ENCODE measurements at regions of chr2 and their contacts with region 1.

Region 1: DNA sequence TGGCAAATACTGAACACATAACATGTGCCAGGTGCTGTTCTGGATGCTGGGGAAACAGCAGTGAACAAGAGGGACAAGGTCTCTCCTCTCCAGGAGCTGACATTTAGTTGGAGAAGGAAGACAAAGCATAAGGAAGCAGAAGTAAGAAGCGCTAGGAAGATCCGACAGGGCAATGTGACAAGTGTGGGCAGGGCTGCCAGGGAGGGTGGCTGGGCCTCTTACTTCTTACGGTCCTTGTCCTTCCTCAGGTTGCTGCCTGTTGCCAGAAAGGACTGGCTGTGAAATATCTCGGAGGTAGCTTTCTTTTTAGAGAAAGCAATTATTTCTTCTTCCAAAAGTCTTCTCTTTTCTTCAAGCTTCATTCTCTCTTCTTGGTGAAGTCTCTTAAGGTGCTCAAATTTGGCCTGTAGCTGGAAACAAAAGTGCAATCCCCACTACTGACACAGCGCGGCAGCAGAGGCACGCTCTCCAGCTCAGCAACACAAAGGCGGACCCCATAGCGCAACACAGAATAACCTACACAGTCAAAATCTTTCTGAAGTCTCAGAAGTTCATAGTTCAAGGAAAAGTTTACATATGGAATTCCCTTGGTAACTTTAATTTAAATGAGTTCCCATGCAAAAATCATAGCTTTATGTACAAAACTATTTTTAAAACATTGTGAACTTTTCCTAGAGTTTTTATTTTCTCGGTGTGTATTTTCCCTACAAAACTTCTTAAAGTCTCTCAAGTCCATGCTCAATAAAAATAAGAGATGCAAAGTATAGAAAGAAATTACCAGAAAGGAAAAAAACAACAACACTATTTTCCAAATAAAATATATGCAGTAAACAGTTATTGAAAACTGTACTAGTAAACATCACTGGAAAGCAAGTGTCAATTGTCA is 67.7 kb downstream of the SEPTIN10 start:
- DNase-seq: no peak
- ATAC-seq: peak; percentile 84

Region 2: GRCh38 chr2:109331896-109332848 is 213.9 kb before region 1 on chr2:
- intact Hi-C with region 1: no loop called
- DNase-seq: peak; percentile 89
- ATAC-seq: peak; percentile 81

Region 3: DNA sequence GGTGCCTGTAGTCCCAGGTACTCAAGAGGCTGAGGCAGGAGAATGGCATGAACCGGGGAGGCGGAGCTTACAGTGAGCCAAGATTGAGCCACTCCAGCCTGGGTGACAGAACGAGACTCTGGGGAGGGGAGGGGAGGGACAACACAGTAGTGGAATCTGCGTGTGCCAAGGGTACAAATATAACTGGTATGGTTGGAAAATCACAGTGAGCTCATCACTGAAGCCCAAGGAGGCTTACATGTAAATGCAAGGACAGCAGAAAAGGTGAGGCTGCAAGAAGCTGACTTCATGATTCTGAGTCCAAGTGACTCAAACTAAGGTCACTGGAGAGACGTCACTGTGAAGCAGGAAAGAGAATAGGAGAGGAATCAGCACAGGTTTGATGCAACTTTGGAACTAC is 58.5 kb after region 1 on chr2:
- intact Hi-C with region 1: loop called (anchors 5 kb)
- DNase-seq: no peak
- ATAC-seq: peak; percentile 27

Region 4: GRCh38 chr2:109715313-109715805 is 169.3 kb after region 1 on chr2:
- intact Hi-C with region 1: loop called (anchors 2 kb)
- DNase-seq: no peak
- ATAC-seq: peak; percentile 85

Region 5: GRCh38 chr2:109736177-109736827 is 190.2 kb after region 1 on chr2:
- intact Hi-C with region 1: loop called (anchors 2 kb)
- DNase-seq: no peak
- ATAC-seq: peak; percentile 52